Ascending aorta (tissue), 2 donors: ENCODE measurements at regions of chr17 and their contacts with region 1.

Region 1: GRCh38 chr17:35242805-35243560 is at the start of gene SLFN5:
- DNase-seq: peak; percentile 93 to 98
- H3K4me3 ChIP-seq: peak within 1 kb of the TSS; percentile 74 to 85
- H3K27ac ChIP-seq: peak within 1 kb of the TSS; percentile 96 to 97
- H3K4me1 ChIP-seq: peaks cover 9 to 26% of the 10 kb centered on the region in 2 donors
- H3K27me3 ChIP-seq: no peaks in the 10 kb centered on the region
- CTCF ChIP-seq: no peak
- total RNA-seq, gene SLFN5: 13.0 TPM

Region 2: DNA sequence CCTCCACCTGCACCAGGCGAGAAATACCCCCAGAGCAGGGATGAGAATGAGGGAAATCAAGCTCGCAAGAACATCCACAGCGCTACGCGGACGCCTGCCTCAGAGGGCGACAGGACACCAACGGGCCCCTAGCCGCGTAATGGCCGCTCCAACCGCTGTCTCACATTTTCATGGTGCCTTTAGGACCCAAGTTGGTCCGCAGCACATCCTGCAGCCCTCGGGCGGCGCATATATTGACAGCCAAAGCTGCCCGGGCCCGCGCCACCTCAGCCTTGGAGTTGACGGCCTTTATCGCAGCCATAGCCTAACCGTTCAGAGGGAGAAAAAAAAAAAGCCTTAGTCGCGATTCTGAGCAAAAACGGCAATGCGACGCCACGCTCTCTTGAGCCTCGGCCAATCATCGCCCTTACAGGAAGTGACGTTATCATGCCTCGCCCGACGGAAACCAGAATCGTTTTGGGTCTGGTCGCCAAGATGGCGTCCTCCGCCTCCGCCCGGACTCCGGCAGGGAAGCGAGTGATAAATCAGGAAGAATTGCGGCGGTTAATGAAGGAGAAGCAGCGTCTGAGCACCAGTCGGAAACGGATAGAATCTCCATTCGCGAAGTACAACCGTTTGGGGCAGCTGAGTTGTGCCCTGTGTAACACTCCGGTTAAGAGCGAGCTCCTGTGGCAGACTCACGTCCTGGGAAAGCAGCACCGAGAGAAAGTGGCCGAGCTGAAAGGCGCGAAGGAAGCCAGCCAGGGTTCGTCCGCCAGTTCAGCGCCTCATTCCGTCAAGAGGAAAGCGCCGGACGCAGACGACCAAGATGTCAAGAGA is 281.7 kb before region 1 on chr17 and contains the starts of genes CCT6B and ZNF830:
- intact Hi-C with region 1: loop called (anchors 2 kb)
- DNase-seq: peak; percentile 65 to 96
- H3K4me3 ChIP-seq: peak within 1 kb of the TSS; percentile 84
- H3K27ac ChIP-seq: peak within 1 kb of the TSS; percentile 87 to 93
- H3K4me1 ChIP-seq: peaks cover 5 to 10% of the 10 kb centered on the region in 2 donors
- H3K27me3 ChIP-seq: no peaks in the 10 kb centered on the region
- CTCF ChIP-seq: peak in 1 of 3 experiments; percentile 1
- total RNA-seq, gene CCT6B: not detected
- total RNA-seq, gene ZNF830: 1.9 TPM

Region 3: DNA sequence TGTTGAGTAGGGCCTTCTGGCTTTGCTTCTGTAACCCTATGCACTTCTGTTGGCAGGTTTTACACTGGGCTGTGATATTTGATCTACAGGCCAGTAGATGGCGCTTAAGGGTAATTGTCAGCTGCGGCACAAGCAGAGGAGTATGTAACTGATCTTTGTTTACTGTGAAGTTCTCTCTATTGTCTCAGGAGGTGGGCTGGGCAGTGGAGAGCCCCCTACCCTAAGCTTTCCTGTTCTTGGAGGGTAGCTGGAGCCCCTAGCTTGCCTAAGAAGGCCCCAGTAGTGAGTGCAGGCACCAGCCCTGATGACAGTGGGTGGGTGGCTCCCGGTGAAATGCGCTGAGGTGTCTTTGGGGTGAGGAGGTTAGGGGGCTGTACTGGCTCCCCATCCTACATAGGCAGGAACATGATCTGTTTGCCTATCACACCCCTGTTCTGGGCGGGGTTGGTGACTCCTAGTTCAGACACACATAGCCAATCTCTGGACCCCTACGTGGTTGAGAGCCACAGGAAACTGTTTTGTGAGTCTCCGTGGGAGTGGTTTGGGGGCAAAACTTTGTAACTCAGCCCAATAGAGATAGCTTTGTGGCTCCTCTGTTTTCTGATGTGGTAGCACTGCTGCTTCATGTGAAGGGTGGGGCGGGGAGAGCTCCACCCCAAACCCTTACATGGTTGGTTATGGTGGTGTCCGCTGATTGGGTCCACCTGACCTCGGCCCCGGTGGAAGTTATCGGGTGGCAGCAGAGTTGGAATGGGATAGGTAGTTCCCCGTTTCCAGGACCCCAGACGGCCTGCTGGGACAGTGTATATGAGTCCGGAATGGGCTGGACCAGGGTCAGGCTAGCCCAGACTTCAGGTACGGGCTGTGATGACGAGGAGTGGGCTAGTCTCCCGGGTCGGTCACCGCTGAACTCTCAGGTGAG is 70.1 kb after region 1 on chr17:
- intact Hi-C with region 1: loop called (anchors 5 kb)
- DNase-seq: peak; percentile 33 to 69
- H3K4me3 ChIP-seq: peak overlapping the region; percentile 41 to 61
- H3K27ac ChIP-seq: peak overlapping the region in 1 of 2 donors; percentile 61
- H3K4me1 ChIP-seq: peaks cover 3 to 18% of the 10 kb centered on the region in 2 donors
- H3K27me3 ChIP-seq: no peaks in the 10 kb centered on the region
- CTCF ChIP-seq: peak; percentile 63 to 82 (median 78)

Region 4: GRCh38 chr17:35432176-35433074 is 189.4 kb after region 1 on chr17 and contains the start of gene SLFN12:
- intact Hi-C with region 1: loop called (anchors 5 kb)
- DNase-seq: peak in 1 of 2 donors; percentile 85
- H3K4me3 ChIP-seq: peak within 1 kb of the TSS; percentile 68 to 70
- H3K27ac ChIP-seq: peak within 1 kb of the TSS; percentile 84 to 91
- H3K4me1 ChIP-seq: peaks cover 0 to 19% of the 10 kb centered on the region in 2 donors
- H3K27me3 ChIP-seq: no peaks in the 10 kb centered on the region
- CTCF ChIP-seq: no peak
- total RNA-seq, gene SLFN12: 6.8 TPM

Region 5: GRCh38 chr17:35808962-35809854 is 566.2 kb after region 1 on chr17 and contains the start of gene TAF15:
- intact Hi-C with region 1: loop called (anchors 5 kb)
- DNase-seq: peak; percentile 85 to 97
- H3K4me3 ChIP-seq: peak within 1 kb of the TSS; percentile 80 to 89
- H3K27ac ChIP-seq: peak within 1 kb of the TSS; percentile 91 to 95
- H3K4me1 ChIP-seq: peaks cover 4 to 39% of the 10 kb centered on the region in 2 donors
- H3K27me3 ChIP-seq: no peaks in the 10 kb centered on the region
- CTCF ChIP-seq: peak; percentile 53 to 85 (median 77)
- total RNA-seq, gene TAF15: 49.6 TPM